ENCODE measurements at regions of chr16 and their contacts with region 1.

Region 1: GRCh38 chr16:58336332-58337089 is 41.7 kb upstream of the PRSS54 start:
- DNase-seq: peak; percentile 92
- ATAC-seq: peak; percentile 95
- H3K4me3 Mint-ChIP-seq: no peak overlapping the region
- H3K27ac Mint-ChIP-seq: no peak overlapping the region
- H3K4me1 Mint-ChIP-seq: peaks cover 5% of the 10 kb centered on the region
- H3K27me3 Mint-ChIP-seq: peaks cover 4% of the 10 kb centered on the region

Region 2: DNA sequence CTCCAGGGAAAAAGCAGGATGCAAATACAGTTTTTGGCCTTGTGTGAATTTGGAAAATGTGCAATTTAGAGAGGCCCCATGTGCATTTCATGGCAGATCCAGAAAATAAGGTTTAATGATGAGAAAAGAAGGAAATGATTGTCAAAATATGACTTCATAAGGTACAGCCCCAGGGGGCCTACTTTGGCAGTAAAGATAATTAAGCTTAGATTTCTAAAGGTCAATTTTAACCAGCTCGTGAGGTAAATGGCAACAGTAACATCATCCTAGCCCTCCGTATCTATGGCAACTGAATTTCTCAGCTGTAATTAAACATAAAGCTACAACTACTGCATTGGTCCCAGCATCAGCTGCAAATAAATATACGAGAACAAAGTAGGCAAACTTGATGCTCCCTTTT is 11.7 kb before region 1 on chr16:
- CTCF ChIA-PET with region 1: interaction called, 41 read pairs
- POLR2A ChIA-PET with region 1: no interaction called
- intact Hi-C with region 1: no loop called
- DNase-seq: no peak
- ATAC-seq: no peak
- H3K4me3 Mint-ChIP-seq: no peak overlapping the region
- H3K27ac Mint-ChIP-seq: no peak overlapping the region
- H3K4me1 Mint-ChIP-seq: no peaks in the 10 kb centered on the region
- H3K27me3 Mint-ChIP-seq: peaks cover 7% of the 10 kb centered on the region

Region 3: DNA sequence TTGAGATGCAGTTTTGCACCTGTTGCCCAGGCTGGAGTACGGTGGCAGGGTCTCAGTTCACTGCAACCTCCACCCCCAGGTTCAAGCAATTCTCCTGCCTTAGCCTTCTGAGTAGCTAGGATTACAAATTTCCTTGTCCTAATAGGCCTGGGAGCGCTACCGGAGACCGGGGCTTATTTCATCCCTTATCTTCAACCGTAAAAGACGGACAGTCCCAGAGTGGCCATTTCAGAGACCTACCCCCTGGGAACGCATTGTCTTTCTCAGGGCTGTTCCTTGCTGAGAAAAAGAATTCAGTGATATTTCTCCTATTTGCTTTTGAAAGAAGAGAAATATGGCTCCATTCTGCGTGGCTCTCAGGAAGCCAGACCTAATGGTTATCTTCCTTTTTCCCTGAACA is 16.2 kb after region 1 on chr16:
- CTCF ChIA-PET with region 1: interaction called, 14 read pairs
- POLR2A ChIA-PET with region 1: no interaction called
- intact Hi-C with region 1: no loop called
- DNase-seq: no peak
- ATAC-seq: no peak
- H3K4me3 Mint-ChIP-seq: no peak overlapping the region
- H3K27ac Mint-ChIP-seq: no peak overlapping the region
- H3K4me1 Mint-ChIP-seq: no peaks in the 10 kb centered on the region
- H3K27me3 Mint-ChIP-seq: peaks cover 18% of the 10 kb centered on the region

Region 4: DNA sequence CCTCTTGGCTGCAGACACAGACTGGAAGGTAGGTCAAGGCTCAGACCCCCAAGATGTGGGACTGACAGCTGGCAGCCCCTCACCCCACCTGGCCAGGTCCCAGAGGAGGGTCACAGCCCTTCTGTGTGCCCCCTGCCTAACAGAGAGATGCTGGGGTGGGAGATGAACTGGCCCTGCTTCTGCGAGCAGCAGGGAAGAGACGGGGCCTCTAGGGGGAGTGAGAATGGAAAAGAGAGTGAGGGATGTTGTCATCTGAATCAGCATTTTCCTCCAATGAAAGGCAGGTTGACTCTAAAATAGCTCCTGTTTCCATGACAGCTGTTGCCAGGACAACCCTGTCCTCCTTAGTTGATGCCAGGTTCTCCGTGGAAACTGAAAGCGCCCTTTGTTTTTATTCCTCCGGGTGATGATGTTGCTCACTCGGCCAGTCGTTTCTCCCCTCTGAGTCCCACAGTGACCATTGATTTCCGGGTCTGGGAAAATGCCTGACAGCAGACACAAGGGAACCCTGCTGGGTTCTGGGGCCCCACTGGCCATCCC is 158.5 kb after region 1 on chr16:
- CTCF ChIA-PET with region 1: interaction called, 45 read pairs
- POLR2A ChIA-PET with region 1: no interaction called
- intact Hi-C with region 1: no loop called
- DNase-seq: peak; percentile 91
- ATAC-seq: peak; percentile 76
- H3K4me3 Mint-ChIP-seq: peak overlapping the region; percentile 17
- H3K27ac Mint-ChIP-seq: peak overlapping the region; percentile 37
- H3K4me1 Mint-ChIP-seq: peaks cover 19% of the 10 kb centered on the region
- H3K27me3 Mint-ChIP-seq: no peaks in the 10 kb centered on the region

Region 5: DNA sequence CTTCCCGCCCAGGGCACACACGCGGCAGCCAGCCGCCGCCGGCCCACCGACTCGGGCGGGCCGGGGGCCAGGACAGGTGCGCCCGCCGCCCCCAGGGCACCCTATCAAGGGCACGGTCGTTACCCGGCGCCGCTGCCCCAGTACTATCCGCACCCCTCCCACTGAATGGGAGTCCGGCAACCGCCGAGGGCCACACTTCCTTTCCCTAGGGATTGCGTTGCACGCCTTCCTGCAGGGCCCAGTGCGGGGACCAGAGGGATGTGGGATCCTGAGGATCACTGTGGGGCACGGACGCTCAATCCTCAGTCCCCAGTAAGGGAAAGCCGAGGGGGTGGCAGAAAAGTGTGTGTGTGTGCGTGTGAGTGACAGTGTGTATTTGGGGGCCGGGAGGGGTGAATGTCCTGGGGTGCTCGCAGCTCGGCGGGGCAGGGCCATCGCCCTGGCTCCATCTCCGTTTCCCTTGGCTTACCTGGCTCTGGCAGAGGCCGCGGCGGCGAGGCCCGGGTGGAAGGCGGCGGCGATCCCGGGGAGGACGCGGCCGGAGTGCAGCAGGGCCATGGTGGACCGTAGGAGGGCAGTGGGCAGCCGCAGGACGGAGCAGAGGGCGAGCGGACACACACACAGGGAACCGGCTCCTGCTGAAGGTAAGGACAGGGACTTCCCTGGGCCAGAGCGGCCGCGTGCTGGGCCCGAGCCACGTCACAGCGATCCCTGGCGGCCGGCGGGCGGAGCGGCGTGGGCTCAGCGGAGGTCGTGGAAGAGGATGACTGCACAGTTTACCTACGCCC is 397.4 kb after region 1 on chr16 and contains the start of gene GOT2:
- CTCF ChIA-PET with region 1: interaction called, 3 read pairs
- POLR2A ChIA-PET with region 1: no interaction called
- intact Hi-C with region 1: loop called in 1 of 2 experiments (anchors 2 kb)
- DNase-seq: peak; percentile 90
- ATAC-seq: peak; percentile 92
- H3K4me3 Mint-ChIP-seq: peak within 1 kb of the TSS; percentile 92
- H3K27ac Mint-ChIP-seq: peak within 1 kb of the TSS; percentile 97
- H3K4me1 Mint-ChIP-seq: peaks cover 42% of the 10 kb centered on the region
- H3K27me3 Mint-ChIP-seq: no peaks in the 10 kb centered on the region
- total RNA-seq, gene GOT2: 128 to 133 TPM